ENCODE measurements at regions of chr3 and their contacts with region 1.

Region 1: DNA sequence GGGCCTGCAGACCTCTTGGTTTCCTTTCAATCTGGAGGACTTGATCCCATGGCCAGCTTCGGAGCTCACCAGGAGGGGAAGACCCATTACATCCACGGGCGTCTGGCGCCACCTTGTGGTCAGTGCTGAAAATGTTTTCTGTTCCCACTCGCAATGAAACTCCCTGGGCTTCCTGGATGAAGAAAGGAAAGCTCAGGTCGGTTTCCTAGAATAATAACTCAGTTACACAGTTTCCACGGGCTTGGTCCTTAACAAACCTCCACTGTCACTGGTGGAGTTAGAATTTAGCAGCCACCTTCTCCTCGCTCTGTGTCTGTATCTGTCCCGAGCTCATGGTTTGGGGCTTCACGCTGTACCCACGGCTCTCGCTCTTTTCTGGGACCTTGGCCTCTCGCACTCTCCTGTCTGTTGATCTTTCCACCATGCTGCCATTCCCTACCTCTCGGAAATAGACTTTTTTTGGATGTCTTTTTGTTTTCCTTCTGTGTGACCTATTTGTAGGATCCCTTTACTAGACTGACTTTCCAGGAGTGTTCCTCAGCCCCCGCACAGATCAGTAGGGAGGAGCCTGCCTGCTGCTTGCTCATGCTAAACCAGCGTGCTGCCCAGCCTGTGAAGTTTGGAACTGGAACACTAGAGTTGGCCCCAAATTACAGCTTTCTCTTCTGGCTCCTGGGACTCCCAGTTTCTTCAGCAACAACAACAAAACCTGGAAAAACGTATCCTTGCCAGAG is 56.3 kb downstream of the IL20RB start:
- DNase-seq: peak; percentile 92
- H3K4me3 ChIP-seq: peak overlapping the region; percentile 39 to 87 (median 58)
- H3K27ac ChIP-seq: peak overlapping the region; percentile 50
- H3K4me1 ChIP-seq: peaks cover 8% of the 10 kb centered on the region
- H3K27me3 ChIP-seq: no peaks in the 10 kb centered on the region
- CTCF ChIP-seq: peak; percentile 71 to 74
- POLR2A ChIP-seq: no peak

Region 2: GRCh38 chr3:136250226-136250902 is 763.8 kb before region 1 on chr3 and contains the start of gene PCCB:
- CTCF ChIA-PET with region 1: interaction called, 3 read pairs
- POLR2A ChIA-PET with region 1: no interaction called
- dilution Hi-C with region 1: no loop called
- intact Hi-C with region 1: loop called (anchors 10 kb)
- DNase-seq: peak; percentile 96
- H3K4me3 ChIP-seq: peak within 1 kb of the TSS; percentile 31 to 73 (median 60)
- H3K27ac ChIP-seq: peak within 1 kb of the TSS; percentile 66
- H3K4me1 ChIP-seq: peaks cover 8% of the 10 kb centered on the region
- H3K27me3 ChIP-seq: no peaks in the 10 kb centered on the region
- CTCF ChIP-seq: peak; percentile 60 to 79
- POLR2A ChIP-seq: peak; percentile 81
- total RNA-seq, gene PCCB: 28.6 and 35.4 TPM in 2 replicates

Region 3: DNA sequence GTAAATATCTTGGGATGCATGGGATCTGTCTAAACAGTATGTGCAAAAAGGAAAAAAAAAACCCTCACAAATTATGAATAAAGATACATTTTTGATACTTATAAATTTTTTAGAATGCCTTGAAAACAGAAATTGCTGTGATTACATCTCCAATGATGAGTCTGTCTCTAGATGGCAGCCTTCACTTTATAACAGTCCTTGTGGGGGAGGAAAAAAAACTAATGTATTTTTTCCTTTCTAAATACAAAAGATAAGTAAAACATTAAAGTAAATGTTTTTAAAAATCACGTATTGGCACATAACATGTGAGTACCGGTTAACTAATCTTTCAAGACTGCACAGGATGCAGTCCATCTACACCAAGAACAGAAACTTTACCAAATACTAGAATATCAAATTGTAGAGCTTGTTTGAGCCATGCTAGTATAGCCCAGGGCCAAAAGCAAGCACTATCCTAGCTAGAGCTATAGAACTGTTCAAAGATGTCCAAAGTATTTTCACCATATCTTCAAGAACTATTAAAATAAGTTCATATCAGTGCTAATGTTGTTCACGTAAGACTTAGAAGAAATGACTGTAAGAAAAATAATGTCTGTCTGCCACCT is 468.4 kb before region 1 on chr3:
- CTCF ChIA-PET with region 1: interaction called, 16 read pairs
- POLR2A ChIA-PET with region 1: no interaction called
- dilution Hi-C with region 1: no loop called
- intact Hi-C with region 1: loop called (anchors 10 kb)
- DNase-seq: peak; percentile 40
- H3K4me3 ChIP-seq: no peak overlapping the region
- H3K27ac ChIP-seq: no peak overlapping the region
- H3K4me1 ChIP-seq: peaks cover 26% of the 10 kb centered on the region
- H3K27me3 ChIP-seq: no peaks in the 10 kb centered on the region
- CTCF ChIP-seq: no peak
- POLR2A ChIP-seq: no peak

Region 4: GRCh38 chr3:136852180-136852579 is 161.9 kb before region 1 on chr3:
- CTCF ChIA-PET with region 1: interaction called, 21 read pairs
- POLR2A ChIA-PET with region 1: no interaction called
- dilution Hi-C with region 1: no loop called
- intact Hi-C with region 1: no loop called
- DNase-seq: no peak
- H3K4me3 ChIP-seq: no peak overlapping the region
- H3K27ac ChIP-seq: peak overlapping the region; percentile 14
- H3K4me1 ChIP-seq: no peaks in the 10 kb centered on the region
- H3K27me3 ChIP-seq: no peaks in the 10 kb centered on the region
- CTCF ChIP-seq: no peak
- POLR2A ChIP-seq: no peak

Region 5: GRCh38 chr3:136949708-136950107 is 64.4 kb before region 1 on chr3:
- CTCF ChIA-PET with region 1: interaction called, 17 read pairs
- POLR2A ChIA-PET with region 1: no interaction called
- dilution Hi-C with region 1: no loop called
- intact Hi-C with region 1: loop called (anchors 1 kb)
- DNase-seq: peak; percentile 44
- H3K4me3 ChIP-seq: no peak overlapping the region
- H3K27ac ChIP-seq: no peak overlapping the region
- H3K4me1 ChIP-seq: peaks cover 12% of the 10 kb centered on the region
- H3K27me3 ChIP-seq: no peaks in the 10 kb centered on the region
- CTCF ChIP-seq: peak in 1 of 2 donors; percentile 16
- POLR2A ChIP-seq: no peak

Region 6: GRCh38 chr3:137052298-137052697 is 38.2 kb after region 1 on chr3:
- CTCF ChIA-PET with region 1: no interaction called
- POLR2A ChIA-PET with region 1: no interaction called
- dilution Hi-C with region 1: no loop called
- intact Hi-C with region 1: no loop called
- DNase-seq: no peak
- H3K4me3 ChIP-seq: no peak overlapping the region
- H3K27ac ChIP-seq: no peak overlapping the region
- H3K4me1 ChIP-seq: no peaks in the 10 kb centered on the region
- H3K27me3 ChIP-seq: peaks cover 2 to 17% of the 10 kb centered on the region in 2 experiments
- CTCF ChIP-seq: no peak
- POLR2A ChIP-seq: no peak

Region 7: GRCh38 chr3:137111497-137111896 is 97.4 kb after region 1 on chr3:
- CTCF ChIA-PET with region 1: no interaction called
- POLR2A ChIA-PET with region 1: no interaction called
- dilution Hi-C with region 1: no loop called
- intact Hi-C with region 1: no loop called
- DNase-seq: no peak
- H3K4me3 ChIP-seq: no peak overlapping the region
- H3K27ac ChIP-seq: no peak overlapping the region
- H3K4me1 ChIP-seq: no peaks in the 10 kb centered on the region
- H3K27me3 ChIP-seq: peaks cover 10 to 14% of the 10 kb centered on the region in 2 experiments
- CTCF ChIP-seq: no peak
- POLR2A ChIP-seq: no peak